ENCODE measurements at regions of chr10 and their contacts with region 1.

Region 1: GRCh38 chr10:69179743-69180524 is at the start of gene SUPV3L1:
- DNase-seq: peak; percentile 92
- H3K4me3 Mint-ChIP-seq: peak within 1 kb of the TSS; percentile 92
- H3K27ac Mint-ChIP-seq: peak within 1 kb of the TSS; percentile 98
- H3K4me1 Mint-ChIP-seq: peaks cover 32% of the 10 kb centered on the region
- H3K27me3 Mint-ChIP-seq: no peaks in the 10 kb centered on the region
- total RNA-seq, gene SUPV3L1: 38.4 to 41.1 TPM

Region 2: GRCh38 chr10:68732651-68733050 is 447.3 kb before region 1 on chr10:
- CTCF ChIA-PET with region 1: no interaction called
- intact Hi-C with region 1: no loop called
- DNase-seq: no peak
- H3K4me3 Mint-ChIP-seq: no peak overlapping the region
- H3K27ac Mint-ChIP-seq: no peak overlapping the region
- H3K4me1 Mint-ChIP-seq: peaks cover 2% of the 10 kb centered on the region
- H3K27me3 Mint-ChIP-seq: no peaks in the 10 kb centered on the region

Region 3: GRCh38 chr10:68988530-68989316 is 191.2 kb before region 1 on chr10 and contains the start of gene KIFBP:
- CTCF ChIA-PET with region 1: no interaction called
- intact Hi-C with region 1: loop called (anchors 5 kb)
- DNase-seq: peak; percentile 94
- H3K4me3 Mint-ChIP-seq: peak within 1 kb of the TSS; percentile 98
- H3K27ac Mint-ChIP-seq: peak within 1 kb of the TSS; percentile 92
- H3K4me1 Mint-ChIP-seq: peaks cover 44% of the 10 kb centered on the region
- H3K27me3 Mint-ChIP-seq: no peaks in the 10 kb centered on the region
- total RNA-seq, gene KIFBP: 10.1 to 10.6 TPM

Region 4: DNA sequence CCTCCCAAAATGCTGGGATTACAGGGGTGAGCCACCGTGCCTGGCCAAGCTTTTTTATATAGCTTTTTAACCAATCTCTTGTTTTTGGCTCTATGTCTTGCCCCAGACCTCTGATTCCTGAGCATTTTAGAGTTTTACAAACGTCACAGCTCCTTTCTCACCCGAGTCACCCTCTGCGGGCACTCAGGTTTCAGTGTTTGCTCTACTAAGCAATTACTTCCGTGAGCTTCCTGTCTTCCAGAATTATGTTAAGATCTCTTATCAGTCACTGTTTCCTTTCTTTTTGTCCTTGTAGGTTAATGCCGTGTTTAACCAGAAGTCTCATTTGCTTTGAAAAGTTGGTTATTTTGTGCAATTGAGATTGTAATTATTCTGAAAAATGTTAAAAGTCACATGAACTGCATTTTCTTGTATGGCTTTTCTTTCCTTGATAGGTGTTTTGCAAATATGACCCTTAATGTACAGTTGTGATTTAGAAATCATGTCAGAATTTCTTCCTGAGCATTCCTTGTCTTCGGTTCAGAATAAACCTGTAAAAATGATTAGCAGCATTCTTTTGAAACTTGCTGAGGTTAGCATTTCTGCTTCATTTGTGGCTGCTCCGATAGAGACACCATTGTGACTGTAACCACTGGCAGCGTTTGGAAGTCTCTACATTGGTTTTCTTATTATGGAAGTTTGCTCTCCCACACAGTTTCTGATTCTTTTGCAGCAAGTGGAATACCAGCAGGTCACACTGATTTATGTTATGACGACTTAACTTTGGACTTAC is 35.7 kb after region 1 on chr10:
- CTCF ChIA-PET with region 1: no interaction called
- intact Hi-C with region 1: loop called (anchors 1 kb)
- DNase-seq: peak; percentile 76
- H3K4me3 Mint-ChIP-seq: peak overlapping the region; percentile 23
- H3K27ac Mint-ChIP-seq: peak overlapping the region; percentile 78
- H3K4me1 Mint-ChIP-seq: peaks cover 29% of the 10 kb centered on the region
- H3K27me3 Mint-ChIP-seq: no peaks in the 10 kb centered on the region

Measured in activated naive CD4-positive, alpha-beta T cell treated with anti-CD3 and anti-CD28 coated beads for 36 hours (primary cell).